ENCODE measurements at regions of chr13 and their contacts with region 1.

Region 1: DNA sequence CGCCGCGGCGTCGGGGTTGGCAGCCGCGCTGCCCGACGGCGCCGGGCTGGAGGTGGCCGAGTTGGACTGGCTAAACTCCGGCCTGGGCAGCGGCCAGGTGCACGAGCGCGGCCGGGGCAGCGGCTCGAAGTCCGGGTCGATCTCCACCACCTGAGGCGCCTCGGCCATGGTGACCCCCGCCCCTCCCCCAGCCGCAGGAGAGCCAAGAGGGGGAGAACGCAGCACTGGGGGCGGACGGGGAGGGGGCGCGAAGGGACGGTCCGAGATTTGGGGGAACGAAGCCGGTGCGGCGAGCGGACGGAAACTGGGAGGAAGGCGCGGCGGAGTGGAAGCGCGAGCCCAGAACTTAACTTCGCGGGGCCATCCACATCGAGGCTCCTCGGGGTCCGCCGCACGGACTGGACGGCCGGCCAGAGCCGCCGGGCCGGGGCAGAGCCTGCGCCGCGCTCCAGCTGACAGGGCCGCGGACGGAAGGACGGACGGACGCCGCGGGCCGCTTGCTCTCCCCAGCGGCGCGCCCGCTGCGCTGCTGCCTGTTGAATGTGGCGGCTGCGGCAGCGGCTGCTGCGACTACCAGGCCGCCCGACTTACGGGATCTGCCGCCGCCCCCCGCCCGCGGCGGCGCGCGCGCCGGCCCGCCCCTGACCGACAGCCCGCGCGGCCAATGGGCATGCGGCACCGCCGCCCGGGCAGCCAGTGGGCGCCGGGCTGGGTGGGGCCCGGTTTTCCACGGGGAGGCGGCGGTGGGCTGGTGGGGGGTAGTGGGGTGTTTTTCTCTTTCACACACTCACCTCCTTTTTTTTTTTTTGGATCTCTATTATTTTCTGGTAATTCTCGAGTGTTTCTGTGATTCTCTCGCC is at the start of gene FOXO1:
- DNase-seq: peak; percentile 93 to 95 (median 94)
- ATAC-seq: peak; percentile 83 to 91 (median 84)
- H3K4me3 ChIP-seq: peak within 1 kb of the TSS; percentile 72 to 99 (median 94)
- H3K27ac ChIP-seq: peak within 1 kb of the TSS; percentile 94 to 99 (median 99)
- H3K4me1 ChIP-seq: peaks cover 6 to 43% (median 36%) of the 10 kb centered on the region in 12 donors
- H3K27me3 ChIP-seq: no peaks in the 10 kb centered on the region
- CTCF ChIP-seq: peak in 1 of 12 donors; percentile 2
- POLR2A ChIP-seq: peak; percentile 72 to 97
- total RNA-seq, gene FOXO1: 9.8 to 26.8 (median 18.5) TPM

Region 2: GRCh38 chr13:39787086-39787487 is 879.2 kb before region 1 on chr13:
- intact Hi-C with region 1: loop called in 1 of 10 experiments (anchors 5 kb)
- DNase-seq: peak in 1 of 5 donors; percentile 11
- ATAC-seq: peak in 3 of 4 donors; percentile 41 to 62 (median 48)
- H3K4me3 ChIP-seq: no peak overlapping the region
- H3K27ac ChIP-seq: peak overlapping the region in 2 of 12 donors; percentile 21 to 36
- H3K4me1 ChIP-seq: peaks cover 0 to 26% (median 4%) of the 10 kb centered on the region in 12 donors
- H3K27me3 ChIP-seq: peaks cover 0 to 3% (median 0%) of the 10 kb centered on the region in 9 donors
- CTCF ChIP-seq: no peak
- POLR2A ChIP-seq: no peak

Region 3: DNA sequence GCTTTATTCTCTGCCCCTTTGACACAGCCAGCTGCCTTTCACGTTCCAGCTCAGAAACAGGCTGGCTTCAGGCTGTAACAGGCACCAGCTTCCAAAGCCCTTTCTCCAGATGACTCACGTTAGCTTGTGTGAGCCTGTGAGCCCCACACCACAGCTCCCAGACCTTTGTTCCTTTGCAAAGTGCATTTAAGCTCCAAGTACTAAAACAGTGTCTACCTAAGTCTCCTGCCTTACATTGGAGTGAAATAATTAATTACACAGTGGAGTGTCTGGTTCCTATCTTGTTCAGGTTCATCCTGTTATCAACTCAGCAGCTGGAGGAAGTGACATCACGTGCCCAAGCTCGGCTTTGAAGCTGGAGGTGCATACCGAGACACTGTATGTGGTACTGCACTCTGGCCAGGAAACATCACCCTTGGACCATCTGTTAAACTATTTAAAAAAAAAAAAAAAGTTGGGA is 475.6 kb before region 1 on chr13:
- intact Hi-C with region 1: loop called in 6 of 10 experiments (anchors 2 to 10 kb)
- DNase-seq: peak in 4 of 5 donors; percentile 30 to 65 (median 49)
- ATAC-seq: peak; percentile 43 to 72 (median 58)
- H3K4me3 ChIP-seq: no peak overlapping the region
- H3K27ac ChIP-seq: peak overlapping the region; percentile 36 to 84 (median 70)
- H3K4me1 ChIP-seq: peaks cover 5 to 52% (median 39%) of the 10 kb centered on the region in 12 donors
- H3K27me3 ChIP-seq: no peaks in the 10 kb centered on the region
- CTCF ChIP-seq: no peak
- POLR2A ChIP-seq: no peak

Region 4: DNA sequence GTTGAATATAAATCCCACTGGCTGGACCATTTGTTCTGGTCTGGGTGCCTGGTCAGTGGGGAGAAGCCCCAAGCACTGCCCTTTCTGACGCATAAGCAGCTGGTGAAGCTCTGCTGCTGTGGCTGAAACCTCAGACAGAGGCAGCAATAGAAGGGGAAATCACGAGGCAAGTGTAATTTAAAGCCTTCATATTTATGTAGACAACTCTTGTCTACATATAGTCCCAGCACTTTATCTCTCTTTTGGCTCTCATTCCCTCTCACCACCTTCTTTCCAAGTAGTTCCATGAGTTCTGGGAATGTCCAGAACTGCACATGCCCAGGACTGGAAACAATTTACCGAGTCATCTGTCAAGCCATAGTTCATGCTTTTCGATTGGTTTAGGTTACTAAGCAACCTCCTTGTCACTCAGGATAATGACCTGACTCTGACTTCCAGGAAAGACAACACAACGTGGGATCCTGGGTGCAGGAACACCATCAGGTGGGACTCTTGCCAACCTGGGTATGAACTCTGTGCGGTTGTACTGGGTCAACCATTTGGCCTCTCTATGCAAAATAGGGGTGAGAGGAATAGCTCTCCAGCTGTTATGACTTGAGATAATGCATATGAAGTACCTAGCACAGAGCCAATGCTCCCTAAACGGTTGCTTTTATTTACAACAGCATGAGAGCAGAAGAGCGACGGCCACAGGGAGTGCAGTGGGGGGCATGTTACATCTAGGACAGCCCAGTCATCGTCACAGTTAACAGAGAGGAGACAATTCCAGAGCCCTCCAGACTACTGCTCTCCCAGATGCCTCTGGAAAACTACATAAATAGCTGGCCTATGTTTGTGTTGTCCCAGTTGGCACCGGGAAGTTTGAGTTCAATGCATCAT is 321.8 kb before region 1 on chr13:
- intact Hi-C with region 1: loop called in 1 of 10 experiments (anchors 10 kb)
- DNase-seq: no peak
- ATAC-seq: peak; percentile 54 to 86 (median 75)
- H3K4me3 ChIP-seq: no peak overlapping the region
- H3K27ac ChIP-seq: peak overlapping the region in 2 of 12 donors; percentile 28 to 31
- H3K4me1 ChIP-seq: peaks cover 0 to 27% (median 11%) of the 10 kb centered on the region in 12 donors
- H3K27me3 ChIP-seq: no peaks in the 10 kb centered on the region
- CTCF ChIP-seq: no peak
- POLR2A ChIP-seq: no peak

Region 5: DNA sequence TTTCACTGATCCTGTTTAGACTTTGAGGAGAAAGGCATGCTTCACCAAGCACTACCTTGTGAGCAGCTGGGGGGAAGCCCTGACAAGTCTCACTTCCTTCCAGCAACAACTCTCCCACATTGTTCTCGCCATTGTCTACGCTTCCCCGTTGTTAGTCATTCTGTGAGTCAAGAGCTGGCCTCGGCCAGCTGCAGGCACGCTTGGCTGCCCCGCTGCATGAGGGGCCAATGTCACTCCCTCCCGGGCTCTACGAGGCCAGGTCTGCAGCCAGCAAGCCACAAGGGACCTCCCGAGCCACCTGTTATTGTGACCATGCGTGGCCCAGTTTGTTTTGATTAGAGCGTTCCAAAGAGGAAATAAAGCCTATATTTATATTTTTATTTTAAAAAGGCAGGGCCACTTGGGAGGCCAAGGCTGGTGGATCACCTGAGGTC is 220.7 kb before region 1 on chr13:
- intact Hi-C with region 1: loop called in 5 of 10 experiments (anchors 2 to 10 kb)
- DNase-seq: peak; percentile 67 to 83 (median 75)
- ATAC-seq: peak; percentile 27 to 92 (median 74)
- H3K4me3 ChIP-seq: no peak overlapping the region
- H3K27ac ChIP-seq: peak overlapping the region in 6 of 12 donors; percentile 28 to 63 (median 52)
- H3K4me1 ChIP-seq: peaks cover 4 to 46% (median 32%) of the 10 kb centered on the region in 12 donors
- H3K27me3 ChIP-seq: no peaks in the 10 kb centered on the region
- CTCF ChIP-seq: no peak
- POLR2A ChIP-seq: no peak

Region 6: GRCh38 chr13:40485611-40486517 is 180.4 kb before region 1 on chr13:
- intact Hi-C with region 1: loop called in 2 of 10 experiments (anchors 5 to 10 kb)
- DNase-seq: no peak
- ATAC-seq: no peak
- H3K4me3 ChIP-seq: no peak overlapping the region
- H3K27ac ChIP-seq: peak overlapping the region in 1 of 12 donors; percentile 83
- H3K4me1 ChIP-seq: peaks cover 0 to 23% (median 2%) of the 10 kb centered on the region in 12 donors
- H3K27me3 ChIP-seq: no peaks in the 10 kb centered on the region
- CTCF ChIP-seq: no peak
- POLR2A ChIP-seq: no peak

Region 7: GRCh38 chr13:40564342-40565001 is 101.8 kb before region 1 on chr13:
- intact Hi-C with region 1: loop called in 2 of 10 experiments (anchors 5 to 10 kb)
- DNase-seq: no peak
- ATAC-seq: peak; percentile 11 to 43 (median 18)
- H3K4me3 ChIP-seq: peak overlapping the region in 1 of 12 donors; percentile 13
- H3K27ac ChIP-seq: peak overlapping the region in 9 of 12 donors; percentile 4 to 59 (median 54)
- H3K4me1 ChIP-seq: peaks cover 9 to 87% (median 59%) of the 10 kb centered on the region in 12 donors
- H3K27me3 ChIP-seq: no peaks in the 10 kb centered on the region
- CTCF ChIP-seq: peak in 3 of 12 donors; percentile 18 to 28 (median 24)
- POLR2A ChIP-seq: no peak